Sigmoid colon (tissue), 7 donors: ENCODE measurements at regions of chr2 and their contacts with region 1.

Region 1: GRCh38 chr2:15591692-15592463 is at the start of gene DDX1:
- DNase-seq: peak; percentile 92
- H3K4me3 ChIP-seq: peak within 1 kb of the TSS; percentile 86 to 98 (median 88)
- H3K27ac ChIP-seq: peak within 1 kb of the TSS; percentile 92 to 96 (median 94)
- H3K4me1 ChIP-seq: peaks cover 0 to 33% (median 26%) of the 10 kb centered on the region in 4 donors
- H3K27me3 ChIP-seq: no peaks in the 10 kb centered on the region
- CTCF ChIP-seq: no peak
- EP300 ChIP-seq: peak in 1 of 4 donors; percentile 23
- POLR2A ChIP-seq: peak; percentile 56 to 59
- total RNA-seq, gene DDX1: 67.9 to 104 (median 83.3) TPM

Region 2: GRCh38 chr2:15492773-15493325 is 99.0 kb before region 1 on chr2:
- intact Hi-C with region 1: no loop called
- DNase-seq: no peak
- H3K4me3 ChIP-seq: no peak overlapping the region
- H3K27ac ChIP-seq: no peak overlapping the region
- H3K4me1 ChIP-seq: peaks cover 0 to 8% (median 0%) of the 10 kb centered on the region in 4 donors
- H3K27me3 ChIP-seq: no peaks in the 10 kb centered on the region
- CTCF ChIP-seq: no peak
- EP300 ChIP-seq: no peak
- POLR2A ChIP-seq: no peak

Region 3: GRCh38 chr2:15504882-15505663 is 86.8 kb before region 1 on chr2:
- intact Hi-C with region 1: no loop called
- DNase-seq: no peak
- H3K4me3 ChIP-seq: no peak overlapping the region
- H3K27ac ChIP-seq: no peak overlapping the region
- H3K4me1 ChIP-seq: no peaks in the 10 kb centered on the region
- H3K27me3 ChIP-seq: no peaks in the 10 kb centered on the region
- CTCF ChIP-seq: no peak
- EP300 ChIP-seq: no peak
- POLR2A ChIP-seq: no peak

Region 4: DNA sequence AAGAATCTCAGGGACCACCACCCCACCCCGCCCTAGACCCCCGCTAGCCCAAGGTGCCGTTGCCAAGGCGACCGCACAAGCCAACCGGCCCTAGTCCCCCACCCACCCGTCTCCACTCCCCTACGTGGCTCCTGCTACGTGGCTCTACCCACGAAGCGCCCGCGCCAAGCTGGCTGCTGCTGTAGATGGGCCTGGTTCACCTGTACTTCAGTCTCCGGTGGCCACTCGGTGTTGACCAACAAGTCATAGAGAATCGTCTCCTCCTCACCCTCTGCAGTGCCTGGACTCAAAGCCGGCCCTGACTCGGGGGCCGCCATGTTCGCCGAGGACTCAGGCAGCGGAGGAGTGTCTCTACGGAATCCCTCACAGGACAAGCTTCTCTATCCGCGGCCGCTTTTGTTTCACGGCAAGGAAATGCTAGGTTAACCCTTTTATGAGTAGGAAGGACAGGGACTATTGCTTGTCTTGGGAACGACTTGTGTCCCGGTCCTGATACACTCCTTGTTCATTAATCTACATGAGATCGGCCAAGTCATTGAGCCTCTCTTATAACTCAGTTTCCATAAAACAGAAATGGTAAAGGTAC is 30.8 kb before region 1 on chr2 and contains the start of gene NBAS:
- intact Hi-C with region 1: loop called (anchors 1 kb)
- DNase-seq: peak; percentile 92
- H3K4me3 ChIP-seq: peak within 1 kb of the TSS; percentile 86 to 93 (median 91)
- H3K27ac ChIP-seq: peak within 1 kb of the TSS; percentile 77 to 87 (median 82)
- H3K4me1 ChIP-seq: peaks cover 0 to 32% (median 16%) of the 10 kb centered on the region in 4 donors
- H3K27me3 ChIP-seq: no peaks in the 10 kb centered on the region
- CTCF ChIP-seq: no peak
- EP300 ChIP-seq: no peak
- POLR2A ChIP-seq: peak in 1 of 2 donors; percentile 38
- total RNA-seq, gene NBAS: 41.9 to 53.2 (median 48.1) TPM